Kidney (tissue), 22 donors: ENCODE measurements at regions of chr3 and their contacts with region 1.

Region 1: DNA sequence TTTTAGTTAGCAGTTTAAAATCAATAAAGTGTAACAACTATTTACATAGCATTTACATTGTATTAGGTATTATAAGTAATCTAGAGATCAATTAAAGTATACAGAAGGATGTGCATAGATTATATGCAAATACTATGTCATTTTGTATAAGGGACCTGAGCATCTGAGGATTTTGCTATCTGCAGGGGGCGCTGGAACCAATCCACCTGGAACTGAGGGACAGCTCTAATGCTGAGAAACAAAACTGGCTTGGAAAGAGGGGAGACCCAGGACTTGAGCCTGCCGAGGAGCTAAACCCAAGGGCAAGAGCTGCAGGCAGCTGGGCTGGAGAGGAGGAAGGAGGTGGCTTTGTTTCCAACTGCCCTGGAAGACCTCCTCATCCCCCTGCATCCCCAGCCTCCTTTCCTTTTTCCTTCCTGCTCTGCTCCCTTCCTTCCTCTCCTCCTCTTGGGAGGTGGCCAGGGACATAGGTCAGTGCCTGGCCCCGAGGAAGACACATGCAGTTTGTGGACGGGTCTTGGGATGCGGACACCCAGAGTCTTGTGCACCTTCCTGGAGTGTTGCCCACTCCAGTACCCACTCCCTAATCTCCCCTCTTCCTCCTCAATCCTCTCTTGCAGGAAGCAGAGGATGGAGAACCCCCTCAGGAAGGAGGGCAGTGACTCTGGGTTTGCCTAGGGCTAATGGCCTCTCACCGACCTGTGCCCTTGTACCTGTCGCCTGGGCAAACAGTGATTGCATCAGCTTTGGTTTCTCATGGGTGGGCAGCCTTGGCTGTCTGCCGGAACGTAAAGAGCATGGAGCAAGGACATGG is 828 bp upstream of the RTP3 start:
- DNase-seq: peak in 2 of 5 donors; percentile 23 to 54
- H3K4me3 ChIP-seq: no peak overlapping the region
- H3K27ac ChIP-seq: no peak overlapping the region
- H3K4me1 ChIP-seq: no peaks in the 10 kb centered on the region
- H3K27me3 ChIP-seq: no peaks in the 10 kb centered on the region
- CTCF ChIP-seq: no peak

Region 2: GRCh38 chr3:46629551-46630517 is 132.9 kb after region 1 on chr3:
- intact Hi-C with region 1: loop called (anchors 10 kb)
- DNase-seq: peak; percentile 91 to 95 (median 93)
- H3K4me3 ChIP-seq: peak overlapping the region; percentile 26 to 69 (median 62)
- H3K27ac ChIP-seq: peak overlapping the region; percentile 61 to 71
- H3K4me1 ChIP-seq: peaks cover 0 to 8% (median 5%) of the 10 kb centered on the region in 3 donors
- H3K27me3 ChIP-seq: no peaks in the 10 kb centered on the region
- CTCF ChIP-seq: peak; percentile 92

Region 3: GRCh38 chr3:46895204-46895660 is 398.3 kb after region 1 on chr3:
- intact Hi-C with region 1: no loop called
- DNase-seq: peak; percentile 63 to 84 (median 74)
- H3K4me3 ChIP-seq: no peak overlapping the region
- H3K27ac ChIP-seq: peak overlapping the region in 1 of 2 donors; percentile 14
- H3K4me1 ChIP-seq: peaks cover 3 to 41% (median 31%) of the 10 kb centered on the region in 3 donors
- H3K27me3 ChIP-seq: no peaks in the 10 kb centered on the region
- CTCF ChIP-seq: peak; percentile 75